ENCODE measurements at regions of chr7 and their contacts with region 1.

Region 1: GRCh38 chr7:41940760-41941343 is 238.0 kb upstream of the INHBA start:
- DNase-seq: peak; percentile 71
- ATAC-seq: peak; percentile 83
- H3K4me3 Mint-ChIP-seq: no peak overlapping the region
- H3K27ac Mint-ChIP-seq: no peak overlapping the region
- H3K4me1 Mint-ChIP-seq: peaks cover 18% of the 10 kb centered on the region
- H3K27me3 Mint-ChIP-seq: peaks cover 17% of the 10 kb centered on the region
- CTCF ChIP-seq: peak; percentile 84

Region 2: DNA sequence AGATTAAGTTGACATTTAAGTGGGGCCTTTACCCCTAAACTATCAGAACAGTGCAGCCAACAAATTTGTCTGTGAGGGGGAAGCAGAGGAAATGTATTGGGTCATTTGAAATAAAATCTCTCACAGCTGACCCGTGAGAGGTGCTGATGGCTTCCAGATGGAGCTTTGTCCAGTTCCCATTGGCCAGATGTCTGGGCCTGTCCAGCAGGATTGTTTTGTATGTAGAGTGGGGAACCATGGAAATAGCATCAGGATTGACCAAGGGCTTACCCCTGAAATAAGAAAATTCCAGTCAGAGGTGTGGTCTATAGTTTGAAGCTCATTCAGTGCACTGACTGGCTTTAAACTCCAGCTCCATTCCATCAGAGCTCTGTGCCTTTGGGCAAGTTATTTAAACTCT is 288.6 kb before region 1 on chr7:
- CTCF ChIA-PET with region 1: no interaction called
- POLR2A ChIA-PET with region 1: no interaction called
- DNase-seq: no peak
- ATAC-seq: no peak
- H3K4me3 Mint-ChIP-seq: no peak overlapping the region
- H3K27ac Mint-ChIP-seq: no peak overlapping the region
- H3K4me1 Mint-ChIP-seq: peaks cover 13% of the 10 kb centered on the region
- H3K27me3 Mint-ChIP-seq: no peaks in the 10 kb centered on the region
- CTCF ChIP-seq: no peak

Region 3: DNA sequence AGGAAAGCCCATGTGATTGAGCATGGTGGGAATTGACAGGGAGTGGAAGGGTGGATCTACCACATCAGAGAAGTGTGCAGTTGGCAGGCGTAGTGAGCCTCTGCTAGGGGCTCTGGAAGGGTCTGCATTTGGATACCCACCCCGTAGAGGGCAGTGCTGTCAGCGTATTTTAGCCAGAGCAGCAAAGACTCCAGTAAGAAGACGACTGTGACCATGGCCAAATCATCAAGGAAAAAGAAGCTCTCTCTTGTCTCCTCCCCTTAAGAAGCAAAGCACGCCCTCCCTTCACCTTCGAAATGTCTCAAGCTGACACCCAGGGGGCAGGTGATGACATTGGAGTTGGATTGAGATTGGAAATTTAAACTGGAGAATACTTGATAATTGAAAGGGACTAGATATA is 169.1 kb before region 1 on chr7:
- CTCF ChIA-PET with region 1: interaction called, 21 read pairs
- POLR2A ChIA-PET with region 1: no interaction called
- DNase-seq: peak; percentile 47
- ATAC-seq: peak; percentile 99
- H3K4me3 Mint-ChIP-seq: no peak overlapping the region
- H3K27ac Mint-ChIP-seq: no peak overlapping the region
- H3K4me1 Mint-ChIP-seq: peaks cover 2% of the 10 kb centered on the region; the same call in 1 of the 2 replicates
- H3K27me3 Mint-ChIP-seq: no peaks in the 10 kb centered on the region; the same call in 1 of the 2 replicates
- CTCF ChIP-seq: 0 out of 2 replicates have a peak, but pooled peaks have one; percentile 26

Region 4: DNA sequence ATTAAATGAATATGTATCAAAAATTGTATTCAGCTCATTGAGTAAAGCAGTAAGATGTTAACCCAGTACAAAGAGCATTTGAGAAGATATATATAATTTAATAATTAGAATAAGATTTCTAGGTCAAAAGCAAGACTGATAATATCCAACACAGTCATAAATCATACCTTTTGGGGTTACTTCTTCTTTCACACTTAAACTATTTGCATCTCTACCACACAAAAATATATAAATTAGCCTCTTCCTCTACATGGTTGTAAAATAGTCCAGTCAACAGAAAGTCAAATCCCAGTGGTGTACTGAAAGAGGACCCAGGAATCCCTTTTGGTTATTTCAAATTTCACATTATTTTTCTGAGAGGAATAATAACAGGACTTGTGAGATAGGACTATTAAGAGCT is 33.4 kb before region 1 on chr7:
- CTCF ChIA-PET with region 1: no interaction called
- POLR2A ChIA-PET with region 1: no interaction called
- DNase-seq: no peak
- ATAC-seq: no peak
- H3K4me3 Mint-ChIP-seq: no peak overlapping the region
- H3K27ac Mint-ChIP-seq: no peak overlapping the region
- H3K4me1 Mint-ChIP-seq: no peaks in the 10 kb centered on the region
- H3K27me3 Mint-ChIP-seq: no peaks in the 10 kb centered on the region; the same call in 1 of the 2 replicates
- CTCF ChIP-seq: no peak

Region 5: GRCh38 chr7:41955893-41956675 is 15.2 kb after region 1 on chr7:
- CTCF ChIA-PET with region 1: interaction called, 53 read pairs
- POLR2A ChIA-PET with region 1: no interaction called
- DNase-seq: peak; percentile 64
- ATAC-seq: peak; percentile 91
- H3K4me3 Mint-ChIP-seq: no peak overlapping the region
- H3K27ac Mint-ChIP-seq: no peak overlapping the region
- H3K4me1 Mint-ChIP-seq: peaks cover 31% of the 10 kb centered on the region
- H3K27me3 Mint-ChIP-seq: no peaks in the 10 kb centered on the region; the same call in 1 of the 2 replicates
- CTCF ChIP-seq: no peak

Region 6: GRCh38 chr7:42071372-42072261 is 130.8 kb after region 1 on chr7:
- CTCF ChIA-PET with region 1: interaction called, 10 read pairs
- POLR2A ChIA-PET with region 1: no interaction called
- DNase-seq: no peak
- ATAC-seq: peak; percentile 66
- H3K4me3 Mint-ChIP-seq: no peak overlapping the region
- H3K27ac Mint-ChIP-seq: no peak overlapping the region
- H3K4me1 Mint-ChIP-seq: peaks cover 70% of the 10 kb centered on the region
- H3K27me3 Mint-ChIP-seq: no peaks in the 10 kb centered on the region
- CTCF ChIP-seq: no peak

Region 7: GRCh38 chr7:42082144-42082543 is 141.3 kb after region 1 on chr7:
- CTCF ChIA-PET with region 1: no interaction called
- POLR2A ChIA-PET with region 1: no interaction called
- DNase-seq: no peak
- ATAC-seq: no peak
- H3K4me3 Mint-ChIP-seq: no peak overlapping the region
- H3K27ac Mint-ChIP-seq: peak overlapping the region; percentile 10; the same call in 1 of the 2 replicates
- H3K4me1 Mint-ChIP-seq: peaks cover 30% of the 10 kb centered on the region
- H3K27me3 Mint-ChIP-seq: peaks cover 11% of the 10 kb centered on the region
- CTCF ChIP-seq: no peak

Region 8: GRCh38 chr7:42522227-42522991 is 581.6 kb after region 1 on chr7:
- CTCF ChIA-PET with region 1: interaction called, 13 read pairs
- POLR2A ChIA-PET with region 1: no interaction called
- DNase-seq: peak; percentile 26
- ATAC-seq: peak; percentile 100
- H3K4me3 Mint-ChIP-seq: no peak overlapping the region
- H3K27ac Mint-ChIP-seq: no peak overlapping the region
- H3K4me1 Mint-ChIP-seq: peaks cover 12% of the 10 kb centered on the region
- H3K27me3 Mint-ChIP-seq: no peaks in the 10 kb centered on the region; the same call in 1 of the 2 replicates
- CTCF ChIP-seq: no peak

Region 9: DNA sequence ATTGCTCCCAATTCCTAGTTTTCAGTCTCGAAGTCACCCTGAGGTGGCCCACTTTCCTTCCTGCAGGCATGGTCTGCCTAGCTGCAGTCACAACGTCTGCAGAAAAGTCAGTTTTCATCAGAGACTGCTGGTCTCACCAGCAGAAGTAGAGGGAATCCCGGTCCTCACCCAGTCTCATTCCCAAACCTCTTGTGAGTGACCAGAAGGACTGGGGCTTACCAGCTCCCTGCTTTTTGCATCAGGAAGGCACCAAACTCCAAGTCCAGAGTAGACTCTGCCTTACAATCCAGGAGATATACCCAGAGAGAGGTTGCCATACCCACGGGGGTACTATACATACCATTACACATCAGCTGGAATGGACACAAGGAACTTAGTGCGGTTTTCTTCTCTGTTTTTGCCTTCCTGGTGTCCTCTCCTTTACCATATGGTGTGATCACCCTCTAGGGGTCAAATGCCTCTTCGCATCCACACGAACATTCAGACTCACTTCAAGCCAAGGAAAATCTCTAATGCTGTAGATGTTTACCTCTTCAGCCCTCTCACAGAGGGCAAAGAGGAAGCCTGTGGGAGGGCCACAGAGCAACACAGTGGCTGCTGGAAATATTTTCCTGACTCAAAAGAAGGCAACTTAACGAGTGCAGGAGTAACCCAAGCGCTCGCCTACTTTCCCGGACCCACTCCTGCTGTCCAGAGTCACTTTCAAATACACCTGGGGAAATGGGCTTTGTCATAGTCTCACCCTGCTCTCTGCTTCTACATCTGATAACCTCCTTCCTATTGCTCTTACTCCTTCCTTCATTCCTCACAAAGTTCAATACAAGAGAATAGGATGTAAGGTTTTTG is 750.2 kb after region 1 on chr7:
- CTCF ChIA-PET with region 1: interaction called, 19 read pairs
- POLR2A ChIA-PET with region 1: no interaction called
- DNase-seq: peak; percentile 32
- ATAC-seq: peak; percentile 81
- H3K4me3 Mint-ChIP-seq: no peak overlapping the region
- H3K27ac Mint-ChIP-seq: no peak overlapping the region
- H3K4me1 Mint-ChIP-seq: peaks cover 43% of the 10 kb centered on the region
- H3K27me3 Mint-ChIP-seq: peaks cover 17% of the 10 kb centered on the region
- CTCF ChIP-seq: peak; percentile 38

Region 10: GRCh38 chr7:42831718-42832431 is 891.0 kb after region 1 on chr7:
- CTCF ChIA-PET with region 1: interaction called, 17 read pairs
- POLR2A ChIA-PET with region 1: no interaction called
- DNase-seq: peak; percentile 40
- ATAC-seq: peak; percentile 90
- H3K4me3 Mint-ChIP-seq: no peak overlapping the region
- H3K27ac Mint-ChIP-seq: no peak overlapping the region
- H3K4me1 Mint-ChIP-seq: peaks cover 38% of the 10 kb centered on the region
- H3K27me3 Mint-ChIP-seq: no peaks in the 10 kb centered on the region
- CTCF ChIP-seq: no peak